ENCODE measurements at regions of chr11 and their contacts with region 1.

Region 1: DNA sequence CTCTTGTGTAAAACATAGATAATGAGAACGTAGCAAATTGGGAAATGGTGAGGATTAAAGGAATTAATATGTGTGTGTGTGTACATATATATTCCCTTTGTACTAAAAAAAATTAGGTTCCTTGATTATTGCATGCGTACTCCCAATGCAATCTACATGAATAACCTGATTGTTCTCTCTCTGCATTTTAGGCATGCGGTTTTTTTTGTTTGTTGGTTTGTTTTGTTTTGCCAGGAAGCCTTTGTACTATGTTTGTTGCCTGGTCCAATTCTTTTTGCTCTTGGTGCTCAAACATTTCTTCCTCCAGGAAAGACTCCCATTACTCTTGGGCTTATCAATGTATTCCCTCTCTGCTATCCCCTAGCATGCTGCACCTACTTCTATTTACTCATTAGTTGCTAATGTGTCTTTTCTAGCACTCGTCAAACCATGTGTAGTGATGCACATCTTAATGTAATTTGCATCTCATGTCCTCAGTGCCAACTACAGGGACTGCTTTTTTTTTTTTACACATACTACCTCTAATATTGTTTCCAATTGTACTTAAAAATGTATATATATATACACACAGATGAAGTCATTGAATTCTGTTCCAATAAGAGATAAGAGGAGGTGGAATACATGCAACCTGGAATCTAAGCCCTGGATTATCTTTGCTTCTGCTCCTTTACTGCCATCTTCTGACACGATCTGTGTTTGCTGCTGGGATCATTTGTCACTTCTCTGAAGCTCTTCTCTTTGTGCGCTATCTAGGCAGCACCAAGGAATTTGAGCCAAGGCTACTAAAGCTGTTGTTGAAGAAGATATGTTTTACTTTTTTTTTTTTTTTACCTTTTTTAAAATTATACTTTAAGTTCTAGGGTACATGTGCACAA is 197.2 kb upstream of the ANO3 start:
- DNase-seq: no peak
- ATAC-seq: no peak

Region 2: DNA sequence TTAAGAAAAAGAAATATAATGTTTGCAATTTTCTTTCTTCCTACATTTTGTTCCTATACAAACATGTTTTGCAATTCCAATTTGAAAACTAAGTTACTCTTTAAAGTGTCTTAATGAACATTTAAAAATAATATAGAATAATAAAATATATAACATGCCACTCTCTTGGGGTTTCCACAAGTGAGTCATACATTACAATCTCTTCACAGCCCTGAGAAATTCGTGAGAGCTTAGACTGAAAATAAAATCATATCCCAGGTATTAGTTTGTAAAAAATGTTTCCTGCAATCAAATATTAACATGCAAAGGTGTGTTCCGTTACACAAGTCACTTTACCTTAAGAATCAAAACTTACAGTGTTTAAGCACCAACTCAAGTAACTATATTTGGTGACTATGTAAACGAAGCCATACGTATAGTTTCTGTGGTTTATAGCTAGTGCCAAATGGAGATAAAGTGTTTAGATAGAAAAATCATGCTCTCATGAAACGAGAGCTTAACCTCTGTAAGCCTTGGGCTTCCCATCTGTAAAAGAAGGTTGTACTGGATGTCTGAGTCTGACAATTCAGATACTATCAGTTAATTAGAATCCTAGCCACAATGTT is 56.4 kb before region 1 on chr11:
- intact Hi-C with region 1: no loop called
- DNase-seq: no peak
- ATAC-seq: no peak

Region 3: GRCh38 chr11:26276798-26277424 is 142.2 kb after region 1 on chr11:
- intact Hi-C with region 1: loop called in 1 of 2 experiments (anchors 10 kb)
- DNase-seq: peak; percentile 24
- ATAC-seq: peak in 1 of 2 donors; percentile 65

Measured in left cardiac atrium (tissue), 4 donors.